ENCODE measurements at regions of chr13 and their contacts with region 1.

Region 1: GRCh38 chr13:75876360-75877050 is 240.4 kb downstream of the LMO7 start:
- DNase-seq: peak; percentile 33 to 65
- ATAC-seq: peak; percentile 94 to 98
- H3K4me3 ChIP-seq: no peak overlapping the region
- H3K27ac ChIP-seq: peak overlapping the region in 1 of 2 experiments; percentile 3; a peak in 1 of 6 replicates
- H3K4me1 ChIP-seq: 0 out of 3 replicates have a peak, but pooled peaks cover 4% of the 10 kb centered on the region
- CTCF ChIP-seq: peak; percentile 88
- EP300 ChIP-seq: no peak
- POLR2A ChIP-seq: no peak
- RAD21 ChIP-seq: peak; percentile 91 to 92

Region 2: GRCh38 chr13:76473552-76474134 is 597.1 kb after region 1 on chr13:
- CTCF ChIA-PET with region 1: interaction called, 70 read pairs
- POLR2A ChIA-PET with region 1: no interaction called
- DNase-seq: peak; percentile 22 to 77
- ATAC-seq: peak; percentile 97 to 99
- H3K4me3 ChIP-seq: no peak overlapping the region
- H3K27ac ChIP-seq: no peak overlapping the region
- H3K4me1 ChIP-seq: no peaks in the 10 kb centered on the region
- CTCF ChIP-seq: peak; percentile 70
- EP300 ChIP-seq: no peak
- POLR2A ChIP-seq: no peak
- RAD21 ChIP-seq: peak; percentile 83 to 88